H1 (cell line): ENCODE measurements at regions of chr5 and their contacts with region 1.

Region 1: GRCh38 chr5:148687427-148687826 is 33.1 kb upstream of the HTR4 start:
- DNase-seq: peak; percentile 23 to 53
- H3K4me3 ChIP-seq: no peak overlapping the region
- H3K27ac ChIP-seq: no peak overlapping the region
- H3K4me1 ChIP-seq: no peaks in the 10 kb centered on the region
- H3K27me3 ChIP-seq: no peaks in the 10 kb centered on the region
- CTCF ChIP-seq: peak; percentile 35 to 98 (median 95)
- EP300 ChIP-seq: no peak
- POLR2A ChIP-seq: no peak
- RAD21 ChIP-seq: peak; percentile 87

Region 2: DNA sequence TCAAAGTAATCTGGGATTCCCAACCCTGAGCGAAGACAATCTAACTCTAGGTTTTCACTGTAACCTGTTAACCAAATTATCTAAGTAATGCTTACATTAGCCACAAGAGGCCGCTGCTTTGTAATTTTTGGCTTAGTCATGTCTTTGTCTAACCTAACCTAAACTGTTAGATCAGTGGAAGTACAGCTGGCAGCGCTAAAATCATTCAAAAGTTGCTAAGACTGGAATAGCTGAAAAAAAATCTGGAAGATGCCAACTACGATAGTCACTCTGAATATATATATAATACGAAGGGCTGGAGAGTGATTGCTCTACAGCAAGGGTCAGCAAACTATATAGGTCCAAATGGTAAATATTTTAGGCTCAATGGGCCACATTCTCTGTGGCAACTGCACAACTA is 243.4 kb before region 1 on chr5:
- CTCF ChIA-PET with region 1: interaction called, 52 read pairs
- POLR2A ChIA-PET with region 1: no interaction called
- DNase-seq: no peak
- H3K4me3 ChIP-seq: no peak overlapping the region
- H3K27ac ChIP-seq: no peak overlapping the region
- H3K4me1 ChIP-seq: no peaks in the 10 kb centered on the region; a peak in 1 of 7 replicates
- H3K27me3 ChIP-seq: no peaks in the 10 kb centered on the region
- CTCF ChIP-seq: peak in 2 of 3 experiments; percentile 71 to 80; a peak in 3 of 4 replicates
- EP300 ChIP-seq: no peak
- POLR2A ChIP-seq: no peak
- RAD21 ChIP-seq: peak; percentile 82 to 86

Region 3: GRCh38 chr5:148457183-148457620 is 230.2 kb before region 1 on chr5:
- CTCF ChIA-PET with region 1: interaction called, 11 read pairs
- POLR2A ChIA-PET with region 1: no interaction called
- DNase-seq: no peak
- H3K4me3 ChIP-seq: no peak overlapping the region
- H3K27ac ChIP-seq: no peak overlapping the region
- H3K4me1 ChIP-seq: peaks cover 0 to 10% (median 8%) of the 10 kb centered on the region in 4 experiments; a peak in 4 of 7 replicates
- H3K27me3 ChIP-seq: no peaks in the 10 kb centered on the region
- CTCF ChIP-seq: peak in 2 of 3 experiments; percentile 39 to 52; a peak in 3 of 4 replicates
- EP300 ChIP-seq: no peak
- POLR2A ChIP-seq: no peak
- RAD21 ChIP-seq: peak; percentile 32 to 42; a peak in 3 of 4 replicates

Region 4: DNA sequence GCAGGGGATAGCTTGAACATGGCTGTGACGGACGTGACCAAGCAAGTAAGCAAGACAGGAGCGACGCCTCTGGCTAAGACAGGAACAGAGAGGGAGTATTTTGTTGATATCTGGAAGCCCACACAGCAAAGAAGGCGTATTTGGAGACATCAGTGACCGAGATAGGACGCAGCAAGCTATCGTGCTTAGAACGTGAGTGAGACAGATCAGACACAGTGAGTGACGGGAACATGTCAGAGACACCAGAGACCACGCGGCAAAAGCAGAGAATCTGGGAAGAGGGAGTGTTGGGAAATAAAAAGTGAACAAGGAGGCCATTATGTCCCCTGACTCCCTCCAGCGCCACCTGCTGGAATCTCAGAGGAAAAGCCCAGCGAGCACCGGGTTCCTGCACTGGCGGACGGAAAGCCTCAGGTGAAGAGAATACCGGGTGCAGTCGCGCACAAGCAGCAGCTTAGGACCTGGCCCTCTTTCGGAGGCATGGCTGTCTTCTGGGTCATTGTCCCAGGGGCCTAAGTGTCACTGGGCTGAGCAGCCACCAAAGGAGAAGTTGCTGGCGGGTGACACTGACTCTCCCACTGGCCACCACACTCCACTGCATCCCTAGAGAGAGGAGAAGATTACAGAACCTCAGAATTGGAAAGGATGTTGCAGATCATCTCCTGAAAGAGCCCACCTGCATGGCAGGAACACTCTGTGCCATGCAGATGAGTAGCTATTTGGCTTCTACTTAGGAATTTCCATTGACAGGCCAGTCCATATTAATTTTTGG is 204.6 kb before region 1 on chr5:
- CTCF ChIA-PET with region 1: interaction called, 16 read pairs
- POLR2A ChIA-PET with region 1: no interaction called
- DNase-seq: peak; percentile 49 to 92
- H3K4me3 ChIP-seq: no peak overlapping the region
- H3K27ac ChIP-seq: no peak overlapping the region
- H3K4me1 ChIP-seq: no peaks in the 10 kb centered on the region
- H3K27me3 ChIP-seq: no peaks in the 10 kb centered on the region; a peak in 2 of 7 replicates
- CTCF ChIP-seq: peak; percentile 83 to 91 (median 84)
- EP300 ChIP-seq: no peak
- POLR2A ChIP-seq: no peak
- RAD21 ChIP-seq: peak; percentile 55 to 73

Region 5: DNA sequence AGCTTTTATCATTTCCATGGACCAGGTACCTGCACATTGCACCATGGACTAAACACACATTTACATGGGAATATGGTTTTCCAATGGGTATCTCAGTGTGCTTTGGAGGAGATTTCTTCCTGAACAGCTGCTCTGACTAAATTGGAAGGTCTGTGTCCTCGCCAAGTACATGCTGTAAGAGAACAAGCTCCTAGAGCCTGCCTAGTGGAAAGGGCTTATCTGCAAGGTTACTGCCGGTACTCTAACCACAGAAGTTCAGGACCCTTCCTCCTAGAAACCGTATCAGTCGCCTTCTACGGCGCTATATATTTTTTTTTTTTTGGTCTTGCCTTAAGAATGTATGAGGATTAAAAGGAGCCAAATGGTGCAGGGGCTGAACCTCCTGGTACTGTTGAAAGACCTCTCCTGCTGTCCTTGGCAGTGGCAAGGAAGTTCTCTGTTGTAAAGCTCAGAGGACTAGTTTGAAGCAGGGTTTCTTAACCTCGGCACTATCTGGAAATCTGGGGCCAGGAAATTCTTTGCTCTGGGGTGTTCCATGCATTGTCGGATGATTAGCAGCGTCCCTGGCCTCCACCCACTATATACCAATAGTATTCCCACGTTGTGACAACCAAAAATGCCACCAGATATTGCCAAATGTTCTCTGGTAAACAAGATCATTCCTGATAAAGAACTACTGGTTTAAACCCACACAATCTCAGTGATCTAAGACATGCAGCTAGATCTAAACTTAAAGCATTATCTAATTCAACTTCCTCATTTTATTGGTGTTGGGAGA is 196.2 kb before region 1 on chr5:
- CTCF ChIA-PET with region 1: interaction called, 11 read pairs
- POLR2A ChIA-PET with region 1: no interaction called
- DNase-seq: no peak
- H3K4me3 ChIP-seq: no peak overlapping the region
- H3K27ac ChIP-seq: no peak overlapping the region
- H3K4me1 ChIP-seq: no peaks in the 10 kb centered on the region
- H3K27me3 ChIP-seq: no peaks in the 10 kb centered on the region; a peak in 1 of 7 replicates
- CTCF ChIP-seq: no peak
- EP300 ChIP-seq: no peak
- POLR2A ChIP-seq: no peak
- RAD21 ChIP-seq: no peak

Region 6: GRCh38 chr5:148523139-148523538 is 164.3 kb before region 1 on chr5:
- CTCF ChIA-PET with region 1: interaction called, 15 read pairs
- POLR2A ChIA-PET with region 1: no interaction called
- DNase-seq: peak in 1 of 2 experiments; percentile 50
- H3K4me3 ChIP-seq: no peak overlapping the region
- H3K27ac ChIP-seq: no peak overlapping the region
- H3K4me1 ChIP-seq: no peaks in the 10 kb centered on the region
- H3K27me3 ChIP-seq: no peaks in the 10 kb centered on the region
- CTCF ChIP-seq: peak in 2 of 3 experiments; percentile 24 to 32; a peak in 2 of 4 replicates
- EP300 ChIP-seq: no peak
- POLR2A ChIP-seq: no peak
- RAD21 ChIP-seq: peak; percentile 12 to 47; a peak in 2 of 4 replicates

Region 7: DNA sequence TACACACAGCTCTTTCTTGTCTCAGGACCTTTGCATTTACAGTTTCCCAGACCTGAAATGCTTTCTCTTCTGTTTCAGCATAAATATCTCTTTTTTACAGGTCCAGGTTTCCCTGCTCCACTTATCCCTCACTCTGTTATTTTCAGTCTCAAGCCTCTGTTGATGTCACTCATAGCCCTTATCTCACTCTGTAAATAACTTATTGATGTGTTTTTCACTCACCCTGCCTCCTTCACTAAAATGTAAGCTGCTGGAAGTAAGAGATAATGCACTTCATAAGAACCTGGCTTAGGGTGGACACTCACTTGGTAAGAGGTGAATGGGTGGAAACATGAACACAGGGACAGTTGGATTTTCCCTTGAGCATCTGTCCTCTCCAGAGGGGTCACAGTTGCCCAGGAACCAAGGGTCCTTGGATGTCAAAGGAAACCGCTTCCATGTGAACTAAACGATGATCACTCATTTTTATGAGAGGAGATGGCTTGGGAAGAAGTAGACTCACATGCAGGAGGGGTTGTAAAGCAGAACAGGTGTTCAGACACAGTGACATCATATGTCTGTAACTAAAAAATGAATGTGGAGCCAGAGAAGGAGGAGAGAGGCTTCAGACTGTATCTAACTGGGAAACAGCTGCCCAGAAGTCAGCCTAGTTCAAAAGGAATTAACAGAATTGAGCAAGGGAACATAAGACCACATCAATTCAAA is 27.6 kb before region 1 on chr5:
- CTCF ChIA-PET with region 1: interaction called, 12 read pairs
- POLR2A ChIA-PET with region 1: no interaction called
- DNase-seq: no peak
- H3K4me3 ChIP-seq: no peak overlapping the region
- H3K27ac ChIP-seq: no peak overlapping the region
- H3K4me1 ChIP-seq: no peaks in the 10 kb centered on the region
- H3K27me3 ChIP-seq: peaks cover 0 to 9% (median 4%) of the 10 kb centered on the region in 4 experiments; a peak in 6 of 7 replicates
- CTCF ChIP-seq: no peak
- EP300 ChIP-seq: no peak
- POLR2A ChIP-seq: no peak
- RAD21 ChIP-seq: no peak